ENCODE measurements at regions of chr18 and their contacts with region 1.

Region 1: GRCh38 chr18:59308248-59308937 is 10.1 kb downstream of the CPLX4 start:
- DNase-seq: peak; percentile 17
- ATAC-seq: peak; percentile 99
- H3K4me3 ChIP-seq: peak overlapping the region; percentile 12 to 35; a peak in 3 of 4 replicates
- H3K27ac ChIP-seq: no peak overlapping the region
- H3K4me1 ChIP-seq: no peaks in the 10 kb centered on the region
- H3K27me3 ChIP-seq: peaks cover 2% of the 10 kb centered on the region; the same call in 1 of the 2 replicates
- CTCF ChIP-seq: peak; percentile 86

Region 2: GRCh38 chr18:58148954-58149471 is 1159.4 kb before region 1 on chr18:
- CTCF ChIA-PET with region 1: no interaction called
- POLR2A ChIA-PET with region 1: no interaction called
- in situ Hi-C with region 1: no loop called
- intact Hi-C with region 1: no loop called
- DNase-seq: no peak
- ATAC-seq: no peak
- H3K4me3 ChIP-seq: no peak overlapping the region
- H3K27ac ChIP-seq: no peak overlapping the region
- H3K4me1 ChIP-seq: peaks cover 6% of the 10 kb centered on the region
- H3K27me3 ChIP-seq: no peaks in the 10 kb centered on the region
- CTCF ChIP-seq: no peak

Region 3: GRCh38 chr18:58172031-58172430 is 1136.4 kb before region 1 on chr18:
- CTCF ChIA-PET with region 1: no interaction called
- POLR2A ChIA-PET with region 1: interaction called, 11 read pairs
- in situ Hi-C with region 1: no loop called
- intact Hi-C with region 1: no loop called
- DNase-seq: no peak
- ATAC-seq: no peak
- H3K4me3 ChIP-seq: no peak overlapping the region
- H3K27ac ChIP-seq: no peak overlapping the region
- H3K4me1 ChIP-seq: peaks cover 11% of the 10 kb centered on the region
- H3K27me3 ChIP-seq: no peaks in the 10 kb centered on the region
- CTCF ChIP-seq: no peak

Region 4: GRCh38 chr18:59249205-59249774 is 59.1 kb before region 1 on chr18:
- CTCF ChIA-PET with region 1: interaction called, 14 read pairs
- POLR2A ChIA-PET with region 1: no interaction called
- in situ Hi-C with region 1: no loop called
- intact Hi-C with region 1: loop called (anchors 5 kb)
- DNase-seq: peak; percentile 72
- ATAC-seq: peak; percentile 74; the same call in 1 of the 2 replicates
- H3K4me3 ChIP-seq: no peak overlapping the region
- H3K27ac ChIP-seq: no peak overlapping the region
- H3K4me1 ChIP-seq: no peaks in the 10 kb centered on the region
- H3K27me3 ChIP-seq: peaks cover 2% of the 10 kb centered on the region
- CTCF ChIP-seq: peak; percentile 71

Region 5: DNA sequence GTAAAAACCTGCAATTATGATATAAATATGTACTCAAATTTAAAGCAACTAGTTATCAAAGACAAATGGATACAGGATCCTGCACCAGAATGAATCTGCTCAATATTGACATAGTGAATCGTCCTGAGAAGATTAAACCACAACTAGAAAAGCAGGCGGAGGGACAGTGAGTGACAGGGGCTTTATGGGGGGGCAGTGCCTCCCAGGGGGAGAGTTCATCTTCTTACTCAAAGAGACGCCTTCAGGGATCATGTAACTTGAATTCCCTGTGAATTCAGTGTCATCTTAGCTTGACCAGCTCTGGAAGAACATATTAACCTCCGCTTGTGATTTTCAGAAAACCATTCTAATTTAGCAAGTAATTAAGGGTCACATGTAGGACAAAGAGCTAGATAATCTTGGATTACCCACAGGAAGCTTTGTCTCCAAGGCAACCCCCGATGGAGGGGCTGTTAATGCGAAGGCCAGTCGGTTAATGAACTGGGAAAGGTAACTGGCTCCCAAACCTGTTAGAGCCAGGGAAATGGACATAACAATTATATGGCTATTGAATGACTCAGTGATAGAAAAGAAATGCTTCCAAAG is 68.0 kb after region 1 on chr18:
- CTCF ChIA-PET with region 1: no interaction called
- POLR2A ChIA-PET with region 1: no interaction called
- in situ Hi-C with region 1: no loop called
- intact Hi-C with region 1: no loop called
- DNase-seq: no peak
- ATAC-seq: no peak
- H3K4me3 ChIP-seq: no peak overlapping the region
- H3K27ac ChIP-seq: no peak overlapping the region
- H3K4me1 ChIP-seq: no peaks in the 10 kb centered on the region
- H3K27me3 ChIP-seq: peaks cover 2% of the 10 kb centered on the region
- CTCF ChIP-seq: no peak

Region 6: DNA sequence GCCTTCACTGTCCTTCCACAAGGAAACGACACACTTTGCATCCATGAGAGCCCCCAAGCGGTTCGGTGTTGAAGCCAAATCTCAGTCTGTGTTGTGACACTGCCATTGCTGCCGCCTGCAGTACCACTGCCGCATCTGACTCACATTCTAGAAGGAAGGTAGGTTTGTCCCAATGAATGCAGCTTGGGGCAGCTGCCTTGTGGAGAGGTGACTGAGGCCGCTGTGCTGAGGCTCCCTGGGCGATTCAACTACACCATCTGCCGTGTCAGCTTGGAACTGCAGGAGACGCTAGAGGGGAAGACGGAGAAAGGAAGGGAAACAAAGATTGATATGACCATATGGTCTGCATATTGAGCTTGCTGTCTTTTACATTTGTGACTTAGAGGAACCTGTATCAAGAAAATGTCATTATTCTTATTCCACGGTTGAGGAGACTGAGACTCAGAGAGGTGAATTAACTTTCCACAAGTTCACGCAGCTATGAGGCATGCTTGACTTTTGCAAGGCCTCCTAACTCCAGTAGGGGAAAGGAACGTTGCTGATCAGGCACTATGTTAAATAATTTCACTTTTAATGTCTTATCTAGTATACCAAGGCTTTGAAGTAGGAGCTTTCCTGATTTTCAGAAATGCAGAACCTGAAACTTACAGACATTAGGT is 94.2 kb after region 1 on chr18:
- CTCF ChIA-PET with region 1: interaction called, 44 read pairs
- POLR2A ChIA-PET with region 1: no interaction called
- in situ Hi-C with region 1: no loop called
- intact Hi-C with region 1: loop called (anchors 5 kb)
- DNase-seq: peak; percentile 71
- ATAC-seq: peak; percentile 100
- H3K4me3 ChIP-seq: no peak overlapping the region
- H3K27ac ChIP-seq: no peak overlapping the region
- H3K4me1 ChIP-seq: no peaks in the 10 kb centered on the region
- H3K27me3 ChIP-seq: no peaks in the 10 kb centered on the region
- CTCF ChIP-seq: peak; percentile 84

Region 7: GRCh38 chr18:59646228-59646962 is 338.0 kb after region 1 on chr18:
- CTCF ChIA-PET with region 1: interaction called, 13 read pairs
- POLR2A ChIA-PET with region 1: no interaction called
- in situ Hi-C with region 1: no loop called
- intact Hi-C with region 1: no loop called
- DNase-seq: no peak
- ATAC-seq: no peak
- H3K4me3 ChIP-seq: no peak overlapping the region
- H3K27ac ChIP-seq: no peak overlapping the region
- H3K4me1 ChIP-seq: no peaks in the 10 kb centered on the region
- H3K27me3 ChIP-seq: no peaks in the 10 kb centered on the region
- CTCF ChIP-seq: peak; percentile 16; the same call in 1 of the 2 replicates